Naive thymus-derived CD4-positive, alpha-beta T cell (primary cell): ENCODE measurements at regions of chr7 and their contacts with region 1.

Region 1: DNA sequence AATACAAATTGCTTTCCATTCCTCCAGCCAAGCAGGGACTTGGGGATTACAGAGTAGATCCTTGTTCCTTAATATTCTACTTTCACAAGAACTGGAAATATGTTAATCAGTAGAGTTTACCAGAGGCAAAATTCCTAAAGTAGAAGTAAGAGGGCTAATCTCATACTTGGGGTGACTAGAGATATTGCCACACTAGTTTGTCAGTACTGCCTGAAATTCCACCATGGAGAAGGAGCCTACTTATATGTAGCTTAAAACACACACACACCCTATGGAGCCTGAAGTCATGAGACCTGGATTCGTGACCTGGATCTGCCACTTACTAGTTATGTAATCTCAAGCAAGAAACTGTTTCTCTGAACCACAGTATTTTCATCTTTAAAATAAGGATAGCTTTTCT is 33.9 kb downstream of the STRIP2 start:
- DNase-seq: no peak
- ATAC-seq: no peak
- H3K4me3 ChIP-seq: no peak overlapping the region
- H3K4me3 Mint-ChIP-seq: no peak overlapping the region
- H3K27ac ChIP-seq: no peak overlapping the region
- H3K27ac Mint-ChIP-seq: peak overlapping the region in 1 of 9 donors; percentile 13
- H3K4me1 ChIP-seq: no peaks in the 10 kb centered on the region
- H3K4me1 Mint-ChIP-seq: peaks cover 0 to 12% (median 0%) of the 10 kb centered on the region in 7 donors
- H3K27me3 ChIP-seq: no peaks in the 10 kb centered on the region
- H3K27me3 Mint-ChIP-seq: no peaks in the 10 kb centered on the region

Region 2: GRCh38 chr7:129163875-129164544 is 304.1 kb before region 1 on chr7:
- CTCF ChIA-PET with region 1: interaction called, 3 read pairs
- POLR2A ChIA-PET with region 1: no interaction called
- intact Hi-C with region 1: loop called in 1 of 2 experiments (anchors 1 kb)
- DNase-seq: peak in 5 of 9 donors; percentile 31 to 42 (median 33)
- ATAC-seq: peak; percentile 73
- H3K4me3 ChIP-seq: no peak overlapping the region
- H3K4me3 Mint-ChIP-seq: no peak overlapping the region
- H3K27ac ChIP-seq: no peak overlapping the region
- H3K27ac Mint-ChIP-seq: no peak overlapping the region
- H3K4me1 ChIP-seq: peaks cover 0 to 5% of the 10 kb centered on the region in 2 donors
- H3K4me1 Mint-ChIP-seq: peaks cover 0 to 11% (median 6%) of the 10 kb centered on the region in 7 donors
- H3K27me3 ChIP-seq: no peaks in the 10 kb centered on the region
- H3K27me3 Mint-ChIP-seq: peaks cover 0 to 9% (median 0%) of the 10 kb centered on the region in 5 donors

Region 3: DNA sequence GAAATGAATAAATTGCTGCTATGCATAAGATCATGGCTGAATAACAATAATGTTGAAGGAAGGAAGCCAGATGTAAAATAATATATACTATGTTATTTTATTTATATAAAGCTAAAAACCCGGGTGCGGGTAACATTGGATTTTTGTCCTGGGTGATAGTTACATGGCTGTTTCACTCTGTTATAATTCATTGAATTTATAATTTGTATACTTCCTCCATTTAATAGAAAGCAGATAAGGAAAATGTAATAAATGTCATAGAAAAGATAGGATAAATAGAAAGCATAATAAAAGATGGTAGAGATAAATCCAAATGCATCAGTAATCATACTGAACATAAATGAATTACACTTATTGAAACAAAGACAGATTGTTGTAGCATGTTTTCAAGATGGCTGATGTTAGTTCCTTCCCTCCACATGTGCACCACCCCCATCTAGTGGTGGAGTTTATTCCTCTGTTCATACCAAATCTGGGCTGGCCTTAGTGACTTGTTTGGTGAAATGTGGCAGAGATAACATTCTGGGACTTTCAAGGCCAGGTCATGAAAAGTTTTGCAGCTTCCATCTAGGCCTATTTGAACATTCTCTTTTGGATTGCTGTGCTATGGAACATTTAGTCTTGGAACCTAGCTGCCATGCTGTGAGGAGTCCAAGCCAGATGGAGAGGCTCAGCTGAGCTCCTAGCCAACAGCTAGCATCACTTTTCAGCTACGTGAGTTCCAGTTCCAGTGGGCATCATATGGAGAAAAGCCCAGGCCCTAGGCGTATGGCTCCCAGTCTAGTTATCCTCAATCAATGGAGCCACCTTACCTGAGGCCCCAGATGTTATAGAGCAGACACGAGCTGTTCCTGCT is 196.4 kb before region 1 on chr7:
- CTCF ChIA-PET with region 1: no interaction called
- POLR2A ChIA-PET with region 1: no interaction called
- intact Hi-C with region 1: loop called (anchors 2 kb)
- DNase-seq: peak; percentile 18 to 80 (median 74)
- ATAC-seq: peak; percentile 98
- H3K4me3 ChIP-seq: no peak overlapping the region
- H3K4me3 Mint-ChIP-seq: peak overlapping the region in 8 of 10 donors; percentile 25 to 75 (median 60)
- H3K27ac ChIP-seq: no peak overlapping the region
- H3K27ac Mint-ChIP-seq: peak overlapping the region in 3 of 9 donors; percentile 50 to 86 (median 73)
- H3K4me1 ChIP-seq: no peaks in the 10 kb centered on the region
- H3K4me1 Mint-ChIP-seq: peaks cover 7 to 20% (median 11%) of the 10 kb centered on the region in 7 donors
- H3K27me3 ChIP-seq: no peaks in the 10 kb centered on the region
- H3K27me3 Mint-ChIP-seq: no peaks in the 10 kb centered on the region

Region 4: GRCh38 chr7:129367700-129368388 is 100.2 kb before region 1 on chr7:
- CTCF ChIA-PET with region 1: interaction called, 67 read pairs
- POLR2A ChIA-PET with region 1: no interaction called
- intact Hi-C with region 1: loop called (anchors 1 kb)
- DNase-seq: peak; percentile 25 to 71 (median 60)
- ATAC-seq: peak; percentile 85
- H3K4me3 ChIP-seq: peak overlapping the region; percentile 10
- H3K4me3 Mint-ChIP-seq: peak overlapping the region in 8 of 10 donors; percentile 12 to 88 (median 34)
- H3K27ac ChIP-seq: no peak overlapping the region
- H3K27ac Mint-ChIP-seq: peak overlapping the region in 5 of 9 donors; percentile 10 to 91 (median 25)
- H3K4me1 ChIP-seq: peaks cover 8% of the 10 kb centered on the region in 2 donors
- H3K4me1 Mint-ChIP-seq: peaks cover 10 to 48% (median 16%) of the 10 kb centered on the region in 7 donors
- H3K27me3 ChIP-seq: no peaks in the 10 kb centered on the region
- H3K27me3 Mint-ChIP-seq: no peaks in the 10 kb centered on the region

Region 5: GRCh38 chr7:129433847-129434674 is 34.0 kb before region 1 on chr7 and contains the start of gene STRIP2:
- CTCF ChIA-PET with region 1: interaction called, 3 read pairs
- POLR2A ChIA-PET with region 1: no interaction called
- intact Hi-C with region 1: loop called in 1 of 2 experiments (anchors 1 kb)
- DNase-seq: peak; percentile 77 to 97 (median 86)
- ATAC-seq: peak; percentile 98
- H3K4me3 ChIP-seq: peak within 1 kb of the TSS; percentile 85
- H3K4me3 Mint-ChIP-seq: peak within 1 kb of the TSS; percentile 90 to 98 (median 93)
- H3K27ac ChIP-seq: peak within 1 kb of the TSS; percentile 52
- H3K27ac Mint-ChIP-seq: peak within 1 kb of the TSS; percentile 11 to 91 (median 69)
- H3K4me1 ChIP-seq: peaks cover 6 to 14% of the 10 kb centered on the region in 2 donors
- H3K4me1 Mint-ChIP-seq: peaks cover 9 to 43% (median 17%) of the 10 kb centered on the region in 7 donors
- H3K27me3 ChIP-seq: peaks cover 4 to 6% of the 10 kb centered on the region in 2 donors
- H3K27me3 Mint-ChIP-seq: peaks cover 8 to 34% (median 29%) of the 10 kb centered on the region in 5 donors
- total RNA-seq, gene STRIP2: 0.14 to 21.4 (median 0.27) TPM in 4 of 5 experiments, not detected in the other

Region 6: DNA sequence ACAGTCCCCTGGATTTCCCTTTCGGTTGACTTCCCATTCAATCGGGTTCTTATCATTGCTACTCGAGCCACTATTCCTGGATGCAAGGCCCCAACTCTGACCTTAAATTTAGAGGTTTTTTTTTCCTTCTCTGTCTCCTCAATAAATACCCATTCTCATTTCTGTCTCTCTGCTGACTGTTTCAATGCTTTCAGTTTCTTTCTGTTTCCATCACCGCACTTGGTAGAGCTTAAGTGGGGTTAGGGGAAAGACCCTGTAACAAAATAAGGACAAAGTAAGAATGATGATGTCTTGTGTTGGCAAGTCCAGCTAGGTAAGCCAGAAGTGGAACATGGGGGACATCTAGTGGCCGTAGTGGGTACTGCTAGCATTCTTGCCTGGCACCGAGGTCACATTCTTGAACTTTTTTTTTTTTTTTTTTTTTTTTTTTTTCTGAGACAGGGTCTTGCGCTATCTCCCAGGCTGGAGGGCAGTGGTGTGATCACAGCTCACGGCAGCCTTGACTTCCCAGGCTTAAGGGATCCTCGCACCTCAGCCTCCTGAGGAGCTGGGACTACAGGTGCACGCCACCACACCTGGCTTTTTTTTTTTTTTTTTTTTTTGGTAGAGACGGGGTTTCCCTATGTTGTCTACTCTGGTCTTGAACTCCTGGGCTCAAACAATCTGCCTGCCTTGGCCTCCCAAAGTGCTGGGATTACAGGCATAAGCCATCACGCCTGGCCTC is 542.8 kb after region 1 on chr7:
- CTCF ChIA-PET with region 1: no interaction called
- POLR2A ChIA-PET with region 1: no interaction called
- intact Hi-C with region 1: loop called (anchors 5 to 10 kb)
- DNase-seq: peak; percentile 71 to 88 (median 81)
- ATAC-seq: peak; percentile 88
- H3K4me3 ChIP-seq: no peak overlapping the region
- H3K4me3 Mint-ChIP-seq: no peak overlapping the region
- H3K27ac ChIP-seq: no peak overlapping the region
- H3K27ac Mint-ChIP-seq: peak overlapping the region in 2 of 9 donors; percentile 81 to 88
- H3K4me1 ChIP-seq: no peaks in the 10 kb centered on the region
- H3K4me1 Mint-ChIP-seq: peaks cover 0 to 9% (median 1%) of the 10 kb centered on the region in 7 donors
- H3K27me3 ChIP-seq: no peaks in the 10 kb centered on the region
- H3K27me3 Mint-ChIP-seq: no peaks in the 10 kb centered on the region